Left lung (tissue), 14 donors: ENCODE measurements at regions of chr17 and their contacts with region 1.

Region 1: DNA sequence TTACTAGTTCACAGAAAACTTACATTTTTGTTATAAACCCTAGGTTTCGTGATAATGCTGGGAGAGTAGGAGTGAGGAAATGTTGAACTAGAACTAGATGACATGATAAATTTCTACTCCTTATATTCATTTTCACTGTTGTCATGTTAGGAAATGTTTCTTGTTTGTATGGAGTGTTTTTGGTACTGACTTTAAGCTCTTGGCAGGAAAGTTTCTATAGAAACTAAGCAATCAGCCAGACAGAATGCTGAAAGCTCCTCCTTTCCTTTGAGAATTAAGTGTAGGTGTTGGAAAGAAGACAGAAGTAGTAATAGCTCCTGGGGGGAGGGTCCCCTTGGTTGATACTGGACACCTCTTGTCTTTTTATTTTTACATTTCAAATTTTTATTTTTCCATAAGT is 309.8 kb downstream of the MAP2K4 start:
- DNase-seq: no peak
- ATAC-seq: no peak
- H3K4me3 ChIP-seq: no peak overlapping the region
- H3K27ac ChIP-seq: no peak overlapping the region
- H3K4me1 ChIP-seq: no peaks in the 10 kb centered on the region
- H3K27me3 ChIP-seq: no peaks in the 10 kb centered on the region
- CTCF ChIP-seq: no peak

Region 2: DNA sequence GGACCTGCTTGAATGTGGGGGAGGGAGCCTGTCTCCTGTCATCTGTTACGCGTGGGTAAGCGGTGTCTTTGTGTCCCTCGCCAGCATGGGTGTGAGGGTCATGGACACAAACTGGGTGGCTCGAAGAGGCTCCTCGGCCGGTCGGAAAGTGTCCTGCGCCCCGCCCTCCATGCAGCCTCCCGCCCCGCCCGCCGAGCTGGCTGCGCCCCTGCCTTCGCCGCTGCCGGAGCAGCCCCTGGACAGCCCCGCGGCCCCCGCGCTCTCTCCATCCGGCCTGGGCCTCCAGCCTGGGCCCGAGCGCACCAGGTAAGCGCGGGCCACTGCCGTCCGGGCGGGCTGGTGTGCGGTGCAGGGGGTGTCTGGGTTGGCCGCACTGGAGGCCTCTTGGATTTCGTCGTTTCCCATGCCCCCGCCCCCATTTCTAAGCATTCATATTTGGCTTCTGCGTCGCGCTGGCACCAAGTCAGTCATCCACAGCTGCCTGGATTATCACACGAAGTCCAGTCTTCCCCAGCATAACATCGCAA is 643.6 kb after region 1 on chr17:
- intact Hi-C with region 1: loop called in 1 of 2 experiments (anchors 10 kb)
- DNase-seq: peak in 2 of 4 donors; percentile 23 to 31
- ATAC-seq: peak; percentile 31
- H3K4me3 ChIP-seq: no peak overlapping the region
- H3K27ac ChIP-seq: no peak overlapping the region
- H3K4me1 ChIP-seq: no peaks in the 10 kb centered on the region
- H3K27me3 ChIP-seq: peaks cover 0 to 26% of the 10 kb centered on the region in 2 donors
- CTCF ChIP-seq: no peak